ENCODE measurements at regions of chr1 and their contacts with region 1.

Region 1: DNA sequence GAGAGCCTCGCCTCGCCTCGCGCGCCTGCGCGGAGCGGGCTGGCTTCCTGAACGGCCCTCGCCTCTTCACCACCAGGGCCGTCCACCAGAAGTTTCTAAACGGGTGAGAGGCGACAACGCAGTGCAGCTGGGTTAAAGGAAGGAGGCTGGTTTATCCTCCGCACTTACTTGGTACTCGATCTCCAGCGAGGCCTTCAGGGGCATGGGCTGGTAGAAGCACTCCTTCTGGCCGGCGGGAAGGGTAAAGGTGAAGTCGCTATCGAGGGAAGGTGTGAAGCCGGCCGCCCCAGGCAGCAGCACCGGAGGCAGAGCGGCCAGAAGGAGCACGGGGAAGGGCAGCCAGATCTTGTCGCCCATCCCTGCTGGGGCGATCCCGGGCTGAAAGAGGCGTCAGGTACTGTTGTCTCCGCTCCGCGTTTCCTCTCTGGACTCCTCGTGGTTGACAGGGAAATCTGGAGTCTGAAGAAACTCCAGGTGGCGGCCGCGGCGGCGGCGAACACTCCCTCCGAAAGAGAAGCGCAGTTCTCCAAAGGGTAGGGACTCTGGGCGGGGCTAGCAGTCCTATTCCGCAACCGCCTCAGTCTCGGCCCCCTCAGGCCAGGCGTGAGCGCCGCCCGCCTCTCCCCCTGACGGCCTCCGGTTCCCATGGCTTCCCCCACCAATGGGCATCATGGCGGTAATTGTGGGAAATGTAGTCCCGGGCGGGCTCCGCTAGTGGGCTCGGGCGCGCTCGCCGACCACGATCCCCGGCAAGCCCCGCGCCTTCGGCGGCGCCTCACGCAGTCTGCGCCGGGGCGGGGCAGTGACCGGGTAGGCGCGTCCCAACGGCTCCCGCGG is at the start of gene TMED5:
- DNase-seq: peak; percentile 98 to 99 (median 99)
- H3K4me3 ChIP-seq: peak within 1 kb of the TSS; percentile 74 to 92 (median 84)
- H3K27ac ChIP-seq: peak within 1 kb of the TSS; percentile 95 to 99 (median 99)
- H3K4me1 ChIP-seq: peaks cover 13 to 22% of the 10 kb centered on the region in 2 donors
- H3K27me3 ChIP-seq: no peaks in the 10 kb centered on the region
- CTCF ChIP-seq: peak in 5 of 6 experiments; percentile 6 to 68 (median 48)
- POLR2A ChIP-seq: peak; percentile 95 to 98
- total RNA-seq, gene TMED5: 31.8 to 172 (median 86.0) TPM

Region 2: DNA sequence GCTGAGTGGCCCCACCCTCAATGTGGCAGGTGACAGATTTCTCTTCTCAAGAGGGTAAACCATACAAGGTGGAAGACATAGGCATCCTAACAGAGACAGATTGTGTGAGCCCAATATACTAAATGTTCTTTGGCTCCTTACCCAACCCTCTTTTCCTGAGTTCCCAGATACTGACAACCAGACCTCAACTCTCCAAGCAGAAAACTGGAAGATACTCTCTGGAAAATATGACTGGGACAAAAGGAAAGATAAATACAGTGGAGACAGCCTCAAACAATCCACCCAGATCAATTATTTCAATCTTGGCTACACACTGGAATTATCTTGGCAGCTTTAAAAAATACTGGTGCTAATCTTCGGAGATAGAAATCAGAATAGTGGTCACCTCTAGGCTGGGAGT is 401.7 kb before region 1 on chr1:
- intact Hi-C with region 1: no loop called
- DNase-seq: no peak
- H3K4me3 ChIP-seq: no peak overlapping the region
- H3K27ac ChIP-seq: no peak overlapping the region
- H3K4me1 ChIP-seq: peaks cover 21 to 53% of the 10 kb centered on the region in 2 donors
- H3K27me3 ChIP-seq: no peaks in the 10 kb centered on the region
- CTCF ChIP-seq: no peak
- POLR2A ChIP-seq: no peak

Region 3: DNA sequence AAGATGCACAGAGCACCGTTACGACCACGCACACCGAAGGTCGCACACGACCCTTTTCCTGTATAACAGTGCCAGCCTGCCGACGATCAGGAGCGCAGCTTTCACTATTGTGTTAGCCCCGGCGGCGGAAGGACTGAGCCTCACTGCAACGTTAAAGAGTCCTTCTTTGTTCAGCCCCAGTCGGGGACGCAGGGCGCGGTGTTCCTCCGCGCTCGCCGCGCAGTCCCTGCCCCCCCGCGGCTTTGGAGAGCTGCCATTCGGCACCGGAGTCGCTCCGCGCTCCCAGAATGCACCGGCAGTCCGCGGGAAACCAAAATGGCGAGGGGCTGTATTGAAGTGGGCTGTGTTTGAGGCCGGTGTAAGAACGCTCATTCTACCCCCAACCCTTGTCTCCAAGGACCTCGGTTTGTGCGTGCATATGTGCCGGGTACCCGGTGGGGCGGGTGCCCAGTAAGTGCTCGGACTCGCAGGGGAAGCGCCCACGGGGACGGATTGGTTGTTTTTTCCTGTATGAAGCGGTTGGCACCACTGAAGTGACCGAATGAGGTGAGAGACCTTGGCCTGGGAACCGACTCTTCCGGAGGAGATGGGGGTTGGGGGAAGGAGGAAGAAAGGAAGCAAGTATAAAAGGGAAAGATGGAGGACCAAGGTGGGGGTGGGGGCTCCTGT is 101.0 kb before region 1 on chr1 and contains the start of gene MTF2:
- intact Hi-C with region 1: loop called in 1 of 2 experiments (anchors 5 kb)
- DNase-seq: peak; percentile 95 to 98 (median 97)
- H3K4me3 ChIP-seq: peak within 1 kb of the TSS; percentile 59 to 89 (median 76)
- H3K27ac ChIP-seq: peak within 1 kb of the TSS; percentile 70 to 90 (median 86)
- H3K4me1 ChIP-seq: peaks cover 14 to 31% of the 10 kb centered on the region in 2 donors
- H3K27me3 ChIP-seq: no peaks in the 10 kb centered on the region
- CTCF ChIP-seq: peak in 1 of 6 experiments; percentile 30
- POLR2A ChIP-seq: peak; percentile 95 to 98
- total RNA-seq, gene MTF2: 4.6 to 62.7 (median 23.4) TPM

Region 4: GRCh38 chr1:93123201-93123783 is 56.8 kb before region 1 on chr1:
- intact Hi-C with region 1: no loop called
- DNase-seq: no peak
- H3K4me3 ChIP-seq: no peak overlapping the region
- H3K27ac ChIP-seq: no peak overlapping the region
- H3K4me1 ChIP-seq: peaks cover 4 to 10% of the 10 kb centered on the region in 2 donors
- H3K27me3 ChIP-seq: no peaks in the 10 kb centered on the region
- CTCF ChIP-seq: no peak
- POLR2A ChIP-seq: no peak